ENCODE measurements at regions of chr5 and their contacts with region 1.

Region 1: GRCh38 chr5:91383027-91383955 is at the start of gene ARRDC3:
- DNase-seq: peak; percentile 96 to 99 (median 99)
- ATAC-seq: peak; percentile 84 to 87
- H3K4me3 ChIP-seq: peak within 1 kb of the TSS; percentile 87
- H3K27ac ChIP-seq: peak within 1 kb of the TSS; percentile 82
- H3K4me1 ChIP-seq: no peaks in the 10 kb centered on the region
- H3K27me3 ChIP-seq: no peaks in the 10 kb centered on the region
- total RNA-seq, gene ARRDC3: 20.1 to 28.9 (median 25.5) TPM

Region 2: GRCh38 chr5:91101600-91102379 is 281.5 kb before region 1 on chr5:
- intact Hi-C with region 1: loop called (anchors 2 to 5 kb)
- DNase-seq: peak; percentile 70 to 80 (median 76)
- ATAC-seq: peak; percentile 96 to 97
- H3K4me3 ChIP-seq: no peak overlapping the region
- H3K27ac ChIP-seq: no peak overlapping the region
- H3K4me1 ChIP-seq: peaks cover 2% of the 10 kb centered on the region
- H3K27me3 ChIP-seq: no peaks in the 10 kb centered on the region

Region 3: GRCh38 chr5:91225848-91226686 is 157.2 kb before region 1 on chr5:
- intact Hi-C with region 1: loop called in 3 of 4 experiments (anchors 10 kb)
- DNase-seq: peak in 1 of 3 donors; percentile 48
- ATAC-seq: peak in 1 of 2 donors; percentile 48
- H3K4me3 ChIP-seq: no peak overlapping the region
- H3K27ac ChIP-seq: no peak overlapping the region
- H3K4me1 ChIP-seq: no peaks in the 10 kb centered on the region
- H3K27me3 ChIP-seq: no peaks in the 10 kb centered on the region

Region 4: DNA sequence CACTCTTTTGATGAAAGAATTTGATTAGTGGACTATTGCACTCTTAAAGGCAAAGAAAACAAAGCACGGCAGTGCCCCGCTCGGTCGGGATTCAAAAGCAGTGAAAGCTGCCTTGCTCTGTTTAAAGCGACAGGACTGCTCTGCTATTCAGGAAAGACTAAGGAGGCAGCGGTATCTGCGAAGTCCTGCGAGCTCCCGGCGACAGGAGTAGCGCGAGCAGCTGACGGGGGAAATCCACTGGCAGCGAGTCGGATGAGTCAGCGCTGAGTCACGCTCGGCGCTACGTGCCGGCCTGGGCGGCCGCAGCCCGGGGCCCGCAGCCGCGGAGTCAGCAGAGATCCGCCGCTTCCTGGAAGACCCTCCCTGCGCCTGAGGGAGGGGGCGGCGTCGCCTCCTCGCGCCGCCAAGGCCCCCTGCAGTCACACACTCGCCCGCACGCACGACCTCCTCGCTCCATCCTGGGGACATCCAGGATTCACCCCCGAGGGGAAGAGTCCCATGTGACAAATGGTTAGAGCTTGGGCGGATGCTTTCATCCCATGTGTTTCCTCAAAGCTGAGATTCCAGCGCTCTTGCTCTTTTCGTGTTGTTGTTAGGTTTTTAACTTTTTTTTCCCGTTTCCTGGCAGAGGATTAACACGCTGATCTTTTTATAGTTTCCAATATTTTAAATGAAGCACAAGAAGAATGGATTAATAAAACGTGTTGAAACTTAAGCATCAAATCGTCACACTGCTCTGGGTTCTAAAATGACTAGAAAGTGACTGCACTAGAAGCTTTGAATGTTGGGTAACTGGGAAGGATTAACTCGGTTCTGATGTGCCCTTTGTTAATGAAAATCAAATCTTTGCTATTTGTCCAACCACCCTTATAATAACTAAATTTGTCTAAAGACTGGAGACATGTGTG is 102.7 kb before region 1 on chr5:
- intact Hi-C with region 1: loop called in 1 of 4 experiments (anchors 10 kb)
- DNase-seq: peak; percentile 96 to 97 (median 97)
- ATAC-seq: peak; percentile 98
- H3K4me3 ChIP-seq: peak overlapping the region; percentile 50
- H3K27ac ChIP-seq: peak overlapping the region; percentile 99
- H3K4me1 ChIP-seq: no peaks in the 10 kb centered on the region
- H3K27me3 ChIP-seq: no peaks in the 10 kb centered on the region